ENCODE measurements at regions of chr22 and their contacts with region 1.

Region 1: DNA sequence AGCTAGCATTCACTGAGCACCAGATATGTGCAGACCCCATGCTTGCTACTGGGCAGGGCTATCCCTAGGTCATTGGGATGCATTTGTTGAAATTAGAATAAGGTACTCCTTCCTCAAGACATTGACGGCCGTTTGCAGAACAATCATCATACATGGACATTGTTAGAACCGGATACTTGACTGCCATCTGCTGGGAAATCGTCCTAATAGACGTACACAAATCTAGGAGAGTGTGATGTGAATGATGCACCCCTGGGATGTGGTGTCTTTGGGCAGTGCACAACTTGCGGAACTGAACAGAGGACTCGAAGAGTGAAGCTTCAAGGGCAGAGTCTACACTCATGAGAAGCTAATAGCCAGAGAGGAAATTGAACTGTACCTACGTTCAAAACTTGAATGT is 35.9 kb downstream of the MYO18B start:
- DNase-seq: no peak
- ATAC-seq: no peak
- H3K4me3 ChIP-seq: no peak overlapping the region
- H3K4me3 Mint-ChIP-seq: no peak overlapping the region
- H3K27ac ChIP-seq: no peak overlapping the region
- H3K27ac Mint-ChIP-seq: no peak overlapping the region
- H3K4me1 ChIP-seq: no peaks in the 10 kb centered on the region
- H3K4me1 Mint-ChIP-seq: peaks cover 3% of the 10 kb centered on the region in 2 donors
- H3K27me3 ChIP-seq: no peaks in the 10 kb centered on the region
- H3K27me3 Mint-ChIP-seq: peaks cover 0 to 3% of the 10 kb centered on the region in 2 donors
- CTCF ChIP-seq: no peak

Region 2: GRCh38 chr22:25193548-25193947 is 584.3 kb before region 1 on chr22:
- intact Hi-C with region 1: loop called (anchors 10 kb)
- DNase-seq: no peak
- ATAC-seq: no peak
- H3K4me3 ChIP-seq: no peak overlapping the region
- H3K4me3 Mint-ChIP-seq: no peak overlapping the region
- H3K27ac ChIP-seq: no peak overlapping the region
- H3K27ac Mint-ChIP-seq: no peak overlapping the region
- H3K4me1 ChIP-seq: no peaks in the 10 kb centered on the region
- H3K4me1 Mint-ChIP-seq: no peaks in the 10 kb centered on the region
- H3K27me3 ChIP-seq: no peaks in the 10 kb centered on the region
- H3K27me3 Mint-ChIP-seq: no peaks in the 10 kb centered on the region
- CTCF ChIP-seq: no peak

Region 3: DNA sequence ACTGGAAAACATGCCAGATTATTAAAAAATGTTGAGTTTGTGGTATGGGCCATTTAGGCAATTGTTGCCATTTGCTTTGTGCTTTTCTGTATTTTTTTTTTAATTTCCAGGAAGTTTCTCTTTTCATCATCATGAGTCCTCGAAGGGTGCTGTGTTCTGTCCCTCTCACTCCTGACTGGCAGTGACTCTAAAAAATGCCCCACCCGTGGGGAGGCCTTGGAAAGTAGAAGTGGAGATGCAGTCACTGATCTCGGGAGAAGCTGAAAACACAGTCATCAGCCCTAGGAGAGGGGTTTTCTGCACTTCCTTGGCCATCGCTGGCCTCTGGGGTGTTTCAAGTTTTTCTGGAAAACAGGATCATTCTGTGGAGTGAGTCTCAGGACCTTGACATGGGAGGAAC is 311.9 kb before region 1 on chr22:
- intact Hi-C with region 1: loop called (anchors 1 kb)
- DNase-seq: no peak
- ATAC-seq: no peak
- H3K4me3 ChIP-seq: no peak overlapping the region
- H3K4me3 Mint-ChIP-seq: no peak overlapping the region
- H3K27ac ChIP-seq: no peak overlapping the region
- H3K27ac Mint-ChIP-seq: no peak overlapping the region
- H3K4me1 ChIP-seq: no peaks in the 10 kb centered on the region
- H3K4me1 Mint-ChIP-seq: peaks cover 7 to 14% of the 10 kb centered on the region in 2 donors
- H3K27me3 ChIP-seq: no peaks in the 10 kb centered on the region
- H3K27me3 Mint-ChIP-seq: no peaks in the 10 kb centered on the region
- CTCF ChIP-seq: no peak

Region 4: DNA sequence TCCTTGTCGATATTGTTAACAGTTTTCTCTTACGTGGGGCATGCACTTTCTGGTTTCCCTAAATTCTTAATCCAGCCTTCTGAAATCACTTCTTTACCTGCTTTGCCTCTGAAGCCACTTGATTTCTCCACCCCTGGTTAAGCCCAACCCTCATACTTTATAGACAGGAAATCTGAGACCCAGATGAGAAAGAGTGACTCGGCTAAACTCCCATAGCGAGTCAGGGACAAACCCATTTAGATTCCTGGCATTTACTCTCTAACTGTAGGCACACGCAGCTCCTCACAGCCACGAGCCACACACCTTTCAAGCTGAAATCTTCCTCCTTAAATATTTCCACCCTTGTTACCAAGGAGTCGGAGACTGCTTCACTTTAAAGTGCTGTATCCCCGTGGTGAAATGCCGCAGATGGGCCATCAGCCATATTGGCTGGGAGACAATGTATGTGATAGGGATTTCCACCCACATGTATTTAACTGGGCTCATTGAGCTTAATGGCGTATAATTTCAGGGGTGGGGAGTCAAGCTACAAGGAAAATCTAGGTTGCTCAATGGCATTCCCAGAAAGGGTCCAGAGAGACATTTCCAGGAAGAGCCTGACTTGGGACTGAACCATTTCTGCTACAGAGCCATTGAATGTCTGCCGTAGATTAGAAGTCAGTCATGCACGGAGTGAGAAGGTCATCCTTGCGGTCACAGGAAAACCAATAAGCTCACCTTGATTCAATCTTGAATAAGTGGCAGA is 263.3 kb before region 1 on chr22:
- intact Hi-C with region 1: no loop called
- DNase-seq: no peak
- ATAC-seq: no peak
- H3K4me3 ChIP-seq: no peak overlapping the region
- H3K4me3 Mint-ChIP-seq: no peak overlapping the region
- H3K27ac ChIP-seq: no peak overlapping the region
- H3K27ac Mint-ChIP-seq: no peak overlapping the region
- H3K4me1 ChIP-seq: no peaks in the 10 kb centered on the region
- H3K4me1 Mint-ChIP-seq: no peaks in the 10 kb centered on the region
- H3K27me3 ChIP-seq: no peaks in the 10 kb centered on the region
- H3K27me3 Mint-ChIP-seq: no peaks in the 10 kb centered on the region
- CTCF ChIP-seq: no peak